ENCODE measurements at regions of chr5 and their contacts with region 1.

Region 1: DNA sequence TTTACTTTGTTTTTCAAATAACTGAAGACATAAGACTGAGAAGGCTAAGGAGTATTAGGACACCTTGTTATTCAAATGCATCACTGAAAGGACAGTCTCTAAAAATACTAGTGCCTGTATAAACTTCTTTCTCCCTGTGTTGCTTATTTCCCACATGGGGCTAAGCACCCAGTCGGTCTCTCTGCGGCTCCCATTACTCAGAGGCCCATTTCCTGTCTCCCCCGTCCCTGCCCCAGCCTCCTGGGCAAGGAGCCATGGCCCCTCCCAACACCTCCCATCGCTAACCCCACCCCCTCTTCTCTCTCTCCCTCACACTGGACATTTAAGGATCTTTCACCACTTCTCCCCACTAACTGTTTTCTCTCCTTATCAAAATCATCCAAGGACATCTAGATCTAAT is 81.9 kb downstream of the EBF1 start:
- DNase-seq: peak; percentile 78

Region 2: DNA sequence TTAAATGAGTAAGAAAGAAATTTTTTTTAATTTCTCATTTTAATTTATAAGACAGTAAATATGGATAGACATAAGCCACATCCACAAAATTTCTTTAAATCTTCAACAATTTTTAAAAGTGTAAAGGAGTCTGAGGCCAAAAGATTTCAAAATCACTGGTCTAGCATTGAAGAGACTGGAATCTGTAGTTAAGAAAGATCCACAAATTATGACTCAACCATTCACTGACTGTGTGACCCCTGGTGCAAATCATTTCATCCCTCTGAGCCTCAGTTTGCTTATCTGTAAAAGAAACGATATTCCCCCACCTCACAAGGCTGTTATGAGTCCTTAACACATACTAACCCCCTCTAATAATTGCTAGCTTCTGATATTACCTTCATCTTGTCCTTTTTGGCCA is 16.5 kb before region 1 on chr5:
- intact Hi-C with region 1: loop called (anchors 2 kb)
- DNase-seq: no peak

Region 3: GRCh38 chr5:159049844-159050315 is 32.1 kb after region 1 on chr5:
- intact Hi-C with region 1: loop called (anchors 5 kb)
- DNase-seq: no peak

Region 4: DNA sequence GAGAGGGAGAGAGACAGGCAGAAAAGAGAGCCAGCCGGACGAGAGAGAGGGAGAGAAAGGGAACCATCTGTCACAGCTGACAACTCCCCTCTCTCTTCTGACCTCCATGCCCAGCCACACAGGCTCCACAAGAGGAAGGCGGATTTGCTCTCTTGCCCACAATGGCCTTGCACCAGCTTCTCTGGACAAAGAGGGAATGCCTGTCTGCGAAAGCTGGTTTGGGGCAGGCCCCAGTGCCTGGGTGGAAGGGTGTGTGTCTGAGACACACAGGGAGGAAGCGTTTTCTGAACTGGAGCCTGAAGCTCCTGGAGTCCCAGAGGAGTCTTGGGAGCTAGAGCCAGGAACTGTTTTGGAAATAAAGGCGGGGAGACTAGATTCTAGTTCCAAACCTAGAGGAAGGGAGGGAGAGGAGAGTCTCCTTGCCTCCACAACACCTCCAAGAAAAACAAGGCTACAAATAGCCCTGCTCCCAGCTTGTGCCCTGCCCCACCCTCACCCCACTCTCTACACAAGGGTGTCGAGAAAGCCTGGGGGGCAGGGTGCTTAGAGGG is 1340.2 kb after region 1 on chr5:
- intact Hi-C with region 1: no loop called
- DNase-seq: no peak

Measured in cardiac septum (tissue), 1 donor.